Activated CD8-positive, alpha-beta T cell treated with anti-CD3 and anti-CD28 coated beads, Interleukin-2, amount 10 ng/mL, durations not matched to agents 7 days and 5 days (primary cell): ENCODE measurements at regions of chr1 and their contacts with region 1.

Region 1: GRCh38 chr1:110766025-110766647 is 91.4 kb upstream of the KCNA3 start:
- DNase-seq: peak; percentile 80
- ATAC-seq: peak; percentile 82
- H3K4me3 Mint-ChIP-seq: peak overlapping the region; percentile 29
- H3K27ac Mint-ChIP-seq: no peak overlapping the region
- H3K4me1 Mint-ChIP-seq: peaks cover 9% of the 10 kb centered on the region
- H3K27me3 Mint-ChIP-seq: peaks cover 36% of the 10 kb centered on the region

Region 2: GRCh38 chr1:110495926-110496600 is 270.1 kb before region 1 on chr1:
- CTCF ChIA-PET with region 1: interaction called, 13 read pairs
- POLR2A ChIA-PET with region 1: no interaction called
- DNase-seq: peak; percentile 88
- ATAC-seq: peak; percentile 87
- H3K4me3 Mint-ChIP-seq: no peak overlapping the region
- H3K27ac Mint-ChIP-seq: no peak overlapping the region
- H3K4me1 Mint-ChIP-seq: peaks cover 14% of the 10 kb centered on the region
- H3K27me3 Mint-ChIP-seq: no peaks in the 10 kb centered on the region

Region 3: DNA sequence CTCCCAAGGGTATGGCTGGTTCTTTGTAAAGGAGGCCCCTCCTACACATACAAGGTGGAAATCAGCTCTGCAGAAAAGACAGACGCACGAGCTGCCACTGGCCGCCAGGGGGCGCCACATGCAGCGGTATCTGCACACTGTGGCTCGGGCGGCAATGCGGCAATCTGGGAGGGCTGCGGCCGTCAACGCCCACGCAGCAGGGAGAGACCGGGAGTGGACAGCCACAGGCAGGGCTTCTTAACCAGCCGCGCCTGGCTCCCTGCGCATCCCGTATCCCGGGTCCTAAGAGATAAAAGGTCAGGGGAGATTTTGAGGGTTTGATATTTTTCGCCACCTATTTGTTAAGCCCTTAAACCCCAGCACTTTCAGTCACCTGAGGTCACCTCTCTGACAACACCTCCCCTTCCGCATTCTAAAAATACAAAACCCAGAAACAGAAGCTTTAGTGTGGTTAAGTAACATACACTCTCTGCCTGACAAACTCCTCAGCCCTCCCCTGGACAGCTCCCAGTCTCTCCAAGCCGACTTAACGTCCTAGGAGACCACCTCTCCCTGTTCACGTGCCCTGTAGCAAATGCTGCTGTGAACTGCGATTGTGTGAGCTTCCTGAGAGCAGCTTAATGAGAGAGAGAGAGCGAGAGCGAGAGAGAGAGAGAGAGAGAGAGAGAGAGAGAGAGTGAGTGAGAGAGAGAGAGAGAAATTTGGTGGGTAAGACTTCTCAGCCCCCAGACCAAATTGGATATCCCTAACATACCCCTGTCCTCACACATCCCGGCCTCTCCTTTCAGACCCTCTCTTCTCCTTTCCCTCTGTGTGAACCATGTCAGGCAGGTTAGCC is 146.5 kb before region 1 on chr1:
- CTCF ChIA-PET with region 1: interaction called, 231 read pairs
- POLR2A ChIA-PET with region 1: interaction called, 18 read pairs
- DNase-seq: peak; percentile 93
- ATAC-seq: peak; percentile 90
- H3K4me3 Mint-ChIP-seq: peak overlapping the region; percentile 82
- H3K27ac Mint-ChIP-seq: peak overlapping the region; percentile 93
- H3K4me1 Mint-ChIP-seq: peaks cover 50% of the 10 kb centered on the region
- H3K27me3 Mint-ChIP-seq: peaks cover under 1% of the 10 kb centered on the region

Region 4: DNA sequence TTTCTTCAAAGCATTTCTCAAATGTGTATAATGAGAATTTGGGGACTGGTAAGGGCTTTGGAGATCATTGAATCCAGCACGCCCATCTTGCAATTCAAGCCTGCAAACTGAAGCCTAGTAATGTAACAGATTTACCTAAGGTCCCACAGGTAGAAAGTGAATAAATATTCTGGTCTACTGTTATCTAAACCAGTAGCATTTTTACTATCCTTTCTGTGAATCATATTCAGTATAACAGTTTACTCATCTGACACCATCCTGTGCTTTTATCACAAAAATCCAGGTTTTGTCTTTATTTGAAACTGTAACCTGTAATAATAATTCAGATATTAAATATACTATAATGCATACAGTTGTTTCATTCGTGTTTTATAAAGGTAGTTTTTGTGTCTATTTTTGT is 108.8 kb before region 1 on chr1:
- CTCF ChIA-PET with region 1: interaction called, 17 read pairs
- POLR2A ChIA-PET with region 1: no interaction called
- DNase-seq: no peak
- ATAC-seq: no peak
- H3K4me3 Mint-ChIP-seq: no peak overlapping the region
- H3K27ac Mint-ChIP-seq: no peak overlapping the region
- H3K4me1 Mint-ChIP-seq: peaks cover 21% of the 10 kb centered on the region
- H3K27me3 Mint-ChIP-seq: no peaks in the 10 kb centered on the region

Region 5: GRCh38 chr1:110734133-110734680 is 31.9 kb before region 1 on chr1:
- CTCF ChIA-PET with region 1: interaction called, 31 read pairs
- POLR2A ChIA-PET with region 1: no interaction called
- DNase-seq: no peak
- ATAC-seq: no peak
- H3K4me3 Mint-ChIP-seq: no peak overlapping the region
- H3K27ac Mint-ChIP-seq: no peak overlapping the region
- H3K4me1 Mint-ChIP-seq: no peaks in the 10 kb centered on the region
- H3K27me3 Mint-ChIP-seq: peaks cover 19% of the 10 kb centered on the region

Region 6: GRCh38 chr1:110798691-110799256 is 32.6 kb after region 1 on chr1:
- CTCF ChIA-PET with region 1: no interaction called
- POLR2A ChIA-PET with region 1: no interaction called
- DNase-seq: no peak
- ATAC-seq: no peak
- H3K4me3 Mint-ChIP-seq: no peak overlapping the region
- H3K27ac Mint-ChIP-seq: no peak overlapping the region
- H3K4me1 Mint-ChIP-seq: peaks cover under 1% of the 10 kb centered on the region
- H3K27me3 Mint-ChIP-seq: peaks cover 2% of the 10 kb centered on the region

Region 7: DNA sequence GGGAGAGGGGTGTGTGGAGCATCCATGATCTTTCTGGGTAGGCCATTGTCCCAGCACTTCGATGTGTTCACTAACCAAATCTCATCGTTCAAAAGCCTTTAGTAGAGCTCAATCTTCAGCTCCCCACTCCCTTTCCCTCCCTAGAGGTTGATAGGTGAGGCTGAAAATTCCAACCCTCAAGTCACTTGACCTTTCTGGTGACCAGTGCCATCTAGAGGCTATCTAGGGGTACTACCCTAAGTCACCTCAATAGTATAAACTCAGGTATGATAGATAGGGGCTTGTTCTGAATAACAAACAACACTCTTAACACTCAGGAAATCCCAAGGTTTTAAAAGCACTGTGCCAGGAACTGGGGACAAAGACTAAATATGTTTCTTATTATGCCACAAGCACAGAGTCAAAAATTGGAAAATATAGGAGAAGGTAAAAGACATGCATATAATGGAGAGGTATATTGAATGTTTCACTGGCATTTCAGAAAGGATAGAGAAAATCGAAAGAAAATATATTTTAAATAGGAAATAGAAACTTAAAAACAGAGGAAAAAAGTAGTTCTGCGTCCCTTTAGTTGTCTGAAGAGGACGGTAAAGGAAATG is 63.9 kb after region 1 on chr1:
- CTCF ChIA-PET with region 1: interaction called, 10 read pairs
- POLR2A ChIA-PET with region 1: no interaction called
- DNase-seq: peak; percentile 59
- ATAC-seq: peak; percentile 88
- H3K4me3 Mint-ChIP-seq: no peak overlapping the region
- H3K27ac Mint-ChIP-seq: no peak overlapping the region
- H3K4me1 Mint-ChIP-seq: peaks cover 8% of the 10 kb centered on the region
- H3K27me3 Mint-ChIP-seq: peaks cover 6% of the 10 kb centered on the region